ENCODE measurements at regions of chr12 and their contacts with region 1.

Region 1: GRCh38 chr12:75908961-75909605 is 122.5 kb downstream of the PHLDA1 start:
- DNase-seq: peak; percentile 79
- ATAC-seq: peak; percentile 79

Region 2: GRCh38 chr12:75848431-75848925 is 60.6 kb before region 1 on chr12:
- intact Hi-C with region 1: loop called (anchors 5 kb)
- DNase-seq: no peak
- ATAC-seq: no peak

Region 3: GRCh38 chr12:75954041-75954440 is 45.0 kb after region 1 on chr12:
- intact Hi-C with region 1: loop called (anchors 5 kb)
- DNase-seq: no peak
- ATAC-seq: peak; percentile 84

Region 4: DNA sequence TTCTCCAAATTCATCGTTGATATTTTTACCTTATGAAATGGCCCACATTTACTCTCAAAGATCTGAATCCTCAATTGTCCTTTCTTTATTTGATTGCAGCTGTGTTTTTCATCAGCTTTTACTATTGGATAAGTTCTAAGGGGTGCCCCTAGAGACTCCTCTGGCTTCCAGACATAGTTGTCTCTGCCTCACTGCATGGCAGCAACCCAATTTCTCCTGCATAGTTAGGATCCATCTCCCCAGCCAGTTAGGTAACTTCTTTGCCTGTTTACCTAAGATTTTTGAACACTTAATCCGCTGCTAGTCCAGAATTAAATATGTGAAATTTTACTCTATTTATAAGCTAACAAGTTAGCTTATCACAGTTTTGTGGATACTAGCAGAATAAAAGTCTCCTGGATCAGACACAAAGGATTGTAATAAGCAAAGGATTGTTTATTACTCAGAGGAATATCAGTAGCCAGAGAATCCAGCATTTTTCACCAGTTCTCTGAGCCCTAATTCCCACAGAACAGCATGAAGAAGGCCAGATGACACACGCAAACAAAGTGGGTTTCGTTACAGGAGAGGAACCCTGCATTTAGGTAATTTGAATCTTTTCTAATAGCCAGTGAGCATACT is 338.1 kb after region 1 on chr12:
- intact Hi-C with region 1: no loop called
- DNase-seq: no peak
- ATAC-seq: peak; percentile 78